ENCODE measurements at regions of chr7 and their contacts with region 1.

Region 1: GRCh38 chr7:30974605-30975255 is 11.0 kb downstream of the GHRHR start:
- DNase-seq: peak; percentile 75
- H3K4me3 ChIP-seq: no peak overlapping the region
- H3K27ac ChIP-seq: no peak overlapping the region
- H3K4me1 ChIP-seq: no peaks in the 10 kb centered on the region
- H3K27me3 ChIP-seq: no peaks in the 10 kb centered on the region
- CTCF ChIP-seq: peak; percentile 40 to 62 (median 55)
- POLR2A ChIP-seq: no peak

Region 2: GRCh38 chr7:30731619-30732018 is 243.1 kb before region 1 on chr7:
- intact Hi-C with region 1: loop called (anchors 10 kb)
- DNase-seq: no peak
- H3K4me3 ChIP-seq: no peak overlapping the region
- H3K27ac ChIP-seq: no peak overlapping the region
- H3K4me1 ChIP-seq: no peaks in the 10 kb centered on the region
- H3K27me3 ChIP-seq: no peaks in the 10 kb centered on the region
- CTCF ChIP-seq: no peak
- POLR2A ChIP-seq: no peak

Region 3: GRCh38 chr7:30800785-30801252 is 173.9 kb before region 1 on chr7:
- intact Hi-C with region 1: loop called (anchors 10 kb)
- DNase-seq: peak; percentile 78
- H3K4me3 ChIP-seq: no peak overlapping the region
- H3K27ac ChIP-seq: no peak overlapping the region
- H3K4me1 ChIP-seq: peaks cover 21% of the 10 kb centered on the region
- H3K27me3 ChIP-seq: no peaks in the 10 kb centered on the region
- CTCF ChIP-seq: peak; percentile 31 to 71 (median 40)
- POLR2A ChIP-seq: no peak

Region 4: DNA sequence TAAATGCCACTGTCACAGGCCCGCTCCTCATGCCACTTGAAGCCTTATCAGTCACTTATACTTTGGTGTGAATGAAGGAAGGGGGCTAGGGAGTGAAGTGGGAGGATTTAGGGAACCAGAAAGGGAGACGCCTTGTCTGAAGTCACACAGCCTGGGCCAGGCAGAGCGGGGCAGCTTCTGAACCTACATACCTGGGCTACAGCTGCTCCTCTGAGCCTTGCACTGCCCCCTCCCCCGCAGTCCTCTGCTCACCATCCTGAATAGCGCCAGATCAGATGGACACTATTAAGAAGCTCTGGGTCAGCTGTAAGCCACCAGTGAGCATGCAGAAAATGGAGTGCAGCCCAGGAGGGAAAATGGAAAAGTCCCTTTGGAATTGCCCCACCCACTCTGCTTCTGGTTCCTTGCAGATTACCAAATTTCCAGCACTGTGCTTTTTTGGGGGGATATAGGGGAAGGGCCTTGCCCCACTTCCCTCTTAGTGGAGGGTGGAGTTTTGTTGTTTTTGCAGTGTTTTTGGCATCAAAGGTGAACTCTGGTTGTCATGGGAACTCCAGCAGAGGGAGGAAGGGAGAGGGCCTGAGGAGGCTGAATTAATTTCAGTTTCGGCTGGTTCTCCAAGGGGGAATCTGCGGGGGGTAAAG is 42.4 kb after region 1 on chr7:
- intact Hi-C with region 1: no loop called
- DNase-seq: no peak
- H3K4me3 ChIP-seq: no peak overlapping the region
- H3K27ac ChIP-seq: no peak overlapping the region
- H3K4me1 ChIP-seq: no peaks in the 10 kb centered on the region
- H3K27me3 ChIP-seq: no peaks in the 10 kb centered on the region
- CTCF ChIP-seq: no peak
- POLR2A ChIP-seq: no peak

Measured in testis (tissue), 5 donors.